ENCODE measurements at regions of chr5 and their contacts with region 1.

Region 1: GRCh38 chr5:178551059-178551458 is 39.1 kb downstream of the COL23A1 start:
- DNase-seq: no peak
- ATAC-seq: no peak
- H3K4me3 ChIP-seq: no peak overlapping the region
- H3K27ac ChIP-seq: peak overlapping the region in 1 of 12 donors; percentile 22
- H3K4me1 ChIP-seq: peaks cover 0 to 31% (median 7%) of the 10 kb centered on the region in 12 donors
- H3K27me3 ChIP-seq: no peaks in the 10 kb centered on the region
- CTCF ChIP-seq: peak; percentile 32 to 74 (median 52)
- POLR2A ChIP-seq: no peak

Region 2: GRCh38 chr5:178232124-178232919 is 318.7 kb before region 1 on chr5 and contains the start of gene PHYKPL:
- intact Hi-C with region 1: loop called in 1 of 10 experiments (anchors 5 kb)
- DNase-seq: peak; percentile 69 to 89 (median 81)
- ATAC-seq: peak; percentile 29 to 81 (median 70)
- H3K4me3 ChIP-seq: peak within 1 kb of the TSS; percentile 59 to 97 (median 73)
- H3K27ac ChIP-seq: peak within 1 kb of the TSS; percentile 82 to 99 (median 98)
- H3K4me1 ChIP-seq: peaks cover 5 to 67% (median 39%) of the 10 kb centered on the region in 12 donors
- H3K27me3 ChIP-seq: no peaks in the 10 kb centered on the region
- CTCF ChIP-seq: peak in 2 of 12 donors; percentile 15 to 17
- POLR2A ChIP-seq: peak in 1 of 2 donors; percentile 54
- total RNA-seq, gene PHYKPL: 33.3 to 56.2 (median 38.6) TPM

Region 3: DNA sequence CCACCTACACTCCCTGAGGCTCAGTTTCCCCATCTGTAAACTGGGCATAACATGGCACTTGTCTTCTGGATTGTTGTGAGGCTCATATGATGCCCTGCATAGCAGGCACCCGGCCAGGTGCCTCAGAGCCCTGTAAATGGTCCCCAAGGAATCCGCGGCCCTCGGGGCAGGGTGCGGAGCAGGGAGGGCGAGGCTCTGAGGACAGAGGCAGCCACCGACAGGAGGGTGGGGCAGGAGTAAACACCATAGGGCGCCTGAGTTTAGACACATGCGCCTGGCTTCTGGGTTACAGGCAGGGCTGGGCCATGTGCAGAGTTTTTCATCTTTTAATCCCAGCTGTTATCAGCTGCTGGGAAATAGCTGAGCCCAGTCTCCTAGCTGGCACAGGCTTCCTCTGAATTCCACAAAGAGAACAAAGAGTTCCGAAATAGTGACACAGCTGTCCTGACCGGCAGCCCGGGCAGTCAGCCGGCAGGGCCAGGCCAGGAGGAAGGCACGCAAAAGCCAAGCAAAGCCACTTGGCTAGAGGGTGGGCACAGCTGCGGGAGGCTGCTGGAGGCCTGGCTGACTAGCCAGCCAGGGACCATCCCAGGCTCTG is 219.6 kb before region 1 on chr5:
- intact Hi-C with region 1: loop called in 4 of 10 experiments (anchors 5 kb)
- DNase-seq: peak; percentile 70 to 88 (median 81)
- ATAC-seq: peak; percentile 86 to 91 (median 88)
- H3K4me3 ChIP-seq: no peak overlapping the region
- H3K27ac ChIP-seq: peak overlapping the region; percentile 76 to 94 (median 85)
- H3K4me1 ChIP-seq: peaks cover 0 to 34% (median 20%) of the 10 kb centered on the region in 12 donors
- H3K27me3 ChIP-seq: no peaks in the 10 kb centered on the region
- CTCF ChIP-seq: no peak
- POLR2A ChIP-seq: peak in 1 of 2 donors; percentile 22

Region 4: DNA sequence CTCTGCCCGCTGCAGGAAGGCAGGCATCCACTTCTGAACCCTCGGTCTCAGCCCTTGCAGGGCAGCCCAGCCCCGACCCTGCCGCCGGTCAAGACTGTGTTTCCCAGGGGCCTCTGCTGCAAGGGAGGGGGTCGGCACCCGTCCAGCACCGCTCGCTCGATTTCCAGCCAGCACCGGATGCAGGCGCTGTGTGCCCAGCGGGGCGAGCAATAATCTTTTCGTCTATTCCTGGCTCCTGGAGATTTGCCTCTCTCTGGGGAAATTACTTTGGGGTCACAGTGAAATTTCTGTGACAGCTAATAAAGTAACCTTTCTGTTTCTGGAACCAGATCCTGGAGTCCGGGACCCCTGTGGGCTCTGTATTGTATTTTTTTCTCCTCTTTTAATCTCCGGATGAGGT is 116.2 kb before region 1 on chr5:
- intact Hi-C with region 1: loop called in 1 of 10 experiments (anchors 5 kb)
- DNase-seq: peak; percentile 64 to 81 (median 78)
- ATAC-seq: peak; percentile 82 to 90 (median 84)
- H3K4me3 ChIP-seq: peak overlapping the region in 2 of 12 donors; percentile 9 to 14
- H3K27ac ChIP-seq: peak overlapping the region in 5 of 12 donors; percentile 34 to 61 (median 54)
- H3K4me1 ChIP-seq: peaks cover 0 to 21% (median 3%) of the 10 kb centered on the region in 12 donors
- H3K27me3 ChIP-seq: no peaks in the 10 kb centered on the region
- CTCF ChIP-seq: peak in 3 of 12 donors; percentile 10 to 33 (median 32)
- POLR2A ChIP-seq: no peak

Region 5: GRCh38 chr5:178461004-178461730 is 89.9 kb before region 1 on chr5:
- intact Hi-C with region 1: loop called (anchors 2 to 10 kb)
- DNase-seq: peak; percentile 81 to 89 (median 86)
- ATAC-seq: peak; percentile 94 to 98 (median 95)
- H3K4me3 ChIP-seq: peak overlapping the region in 2 of 12 donors; percentile 13 to 32
- H3K27ac ChIP-seq: peak overlapping the region; percentile 34 to 87 (median 70)
- H3K4me1 ChIP-seq: peaks cover 0 to 19% (median 7%) of the 10 kb centered on the region in 12 donors
- H3K27me3 ChIP-seq: no peaks in the 10 kb centered on the region
- CTCF ChIP-seq: peak; percentile 73 to 93 (median 84)
- POLR2A ChIP-seq: no peak

Region 6: GRCh38 chr5:178590141-178590923 is 39.3 kb after region 1 on chr5 and contains the start of gene COL23A1:
- intact Hi-C with region 1: loop called in 2 of 10 experiments (anchors 5 kb)
- DNase-seq: peak; percentile 75 to 87 (median 80)
- ATAC-seq: peak; percentile 64 to 91 (median 86)
- H3K4me3 ChIP-seq: peak within 1 kb of the TSS; percentile 17 to 66 (median 56)
- H3K27ac ChIP-seq: peak within 1 kb of the TSS in 11 of 12 donors; percentile 54 to 86 (median 78)
- H3K4me1 ChIP-seq: peaks cover 0 to 39% (median 15%) of the 10 kb centered on the region in 12 donors
- H3K27me3 ChIP-seq: peaks cover 0 to 21% (median 9%) of the 10 kb centered on the region in 9 donors
- CTCF ChIP-seq: peak; percentile 41 to 80 (median 66)
- POLR2A ChIP-seq: no peak
- total RNA-seq, gene COL23A1: 6.0 to 33.0 (median 21.2) TPM

Measured in heart left ventricle (tissue), 16 donors.